OCI-LY7 (cell line): ENCODE measurements at regions of chr5 and their contacts with region 1.

Region 1: GRCh38 chr5:176660860-176661641 is 13.8 kb downstream of the TSPAN17 start:
- DNase-seq: peak; percentile 86
- H3K4me3 ChIP-seq: no peak overlapping the region
- H3K27ac ChIP-seq: no peak overlapping the region
- H3K4me1 ChIP-seq: peaks cover 5% of the 10 kb centered on the region
- CTCF ChIP-seq: peak; percentile 94

Region 2: GRCh38 chr5:176559683-176560082 is 101.4 kb before region 1 on chr5:
- CTCF ChIA-PET with region 1: no interaction called
- POLR2A ChIA-PET with region 1: no interaction called
- intact Hi-C with region 1: no loop called
- DNase-seq: peak; percentile 62
- H3K4me3 ChIP-seq: no peak overlapping the region
- H3K27ac ChIP-seq: no peak overlapping the region
- H3K4me1 ChIP-seq: peaks cover 6% of the 10 kb centered on the region
- CTCF ChIP-seq: peak; percentile 65

Region 3: GRCh38 chr5:176959051-176959450 is 298.0 kb after region 1 on chr5:
- CTCF ChIA-PET with region 1: interaction called, 3 read pairs
- POLR2A ChIA-PET with region 1: no interaction called
- intact Hi-C with region 1: loop called (anchors 2 kb)
- DNase-seq: peak; percentile 63
- H3K4me3 ChIP-seq: no peak overlapping the region
- H3K27ac ChIP-seq: no peak overlapping the region
- H3K4me1 ChIP-seq: no peaks in the 10 kb centered on the region
- CTCF ChIP-seq: peak; percentile 80

Region 4: GRCh38 chr5:177071666-177072385 is 410.8 kb after region 1 on chr5:
- CTCF ChIA-PET with region 1: interaction called, 11 read pairs
- POLR2A ChIA-PET with region 1: interaction called, 5 read pairs
- intact Hi-C with region 1: no loop called
- DNase-seq: peak; percentile 91
- H3K4me3 ChIP-seq: no peak overlapping the region
- H3K27ac ChIP-seq: peak overlapping the region; percentile 63
- H3K4me1 ChIP-seq: peaks cover 25% of the 10 kb centered on the region
- CTCF ChIP-seq: peak; percentile 97

Region 5: DNA sequence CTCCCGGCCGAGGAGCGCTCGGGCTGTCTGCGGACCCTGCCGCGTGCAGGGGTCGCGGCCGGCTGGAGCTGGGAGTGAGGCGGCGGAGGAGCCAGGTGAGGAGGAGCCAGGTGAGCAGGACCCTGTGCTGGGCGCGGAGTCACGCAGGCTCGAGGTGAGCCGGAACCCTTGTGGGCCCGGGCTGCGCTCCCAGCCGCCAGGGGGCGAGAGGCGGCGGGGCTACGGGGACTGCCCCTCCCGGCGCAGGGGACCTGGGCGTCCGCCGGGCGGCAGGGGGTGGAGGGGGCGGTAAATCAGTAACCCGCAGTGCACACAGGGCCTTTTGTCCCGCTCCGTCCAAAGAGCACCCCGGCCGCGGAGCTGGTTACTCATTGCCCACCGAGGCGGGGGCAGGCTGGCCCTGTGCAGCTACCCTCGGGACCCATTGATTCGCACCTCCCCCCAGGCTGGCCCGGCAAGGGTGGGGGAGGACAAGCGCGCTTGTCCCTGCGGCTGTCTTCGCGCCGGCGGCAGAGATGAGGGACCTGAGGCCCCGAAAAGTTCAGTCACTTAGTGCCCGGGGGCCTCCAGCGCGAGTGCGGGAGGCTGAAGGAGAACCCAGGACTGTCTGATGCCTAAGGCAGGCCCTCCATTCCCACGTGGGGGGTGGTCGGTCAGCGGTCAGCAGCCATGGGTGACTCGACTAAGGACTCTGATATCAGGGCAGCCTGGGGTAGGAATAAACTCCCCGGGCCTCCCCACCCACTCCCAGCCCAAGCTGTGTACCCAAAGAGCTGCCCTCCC is 426.1 kb after region 1 on chr5:
- CTCF ChIA-PET with region 1: interaction called, 3 read pairs
- POLR2A ChIA-PET with region 1: no interaction called
- intact Hi-C with region 1: loop called (anchors 10 kb)
- DNase-seq: peak; percentile 69
- H3K4me3 ChIP-seq: peak overlapping the region; percentile 66
- H3K27ac ChIP-seq: no peak overlapping the region
- H3K4me1 ChIP-seq: peaks cover 27% of the 10 kb centered on the region
- CTCF ChIP-seq: peak; percentile 80

Region 6: GRCh38 chr5:177103523-177104253 is 442.6 kb after region 1 on chr5:
- CTCF ChIA-PET with region 1: no interaction called
- POLR2A ChIA-PET with region 1: no interaction called
- intact Hi-C with region 1: no loop called
- DNase-seq: no peak
- H3K4me3 ChIP-seq: no peak overlapping the region
- H3K27ac ChIP-seq: no peak overlapping the region
- H3K4me1 ChIP-seq: peaks cover 5% of the 10 kb centered on the region
- CTCF ChIP-seq: no peak